IMR-90 (cell line): ENCODE measurements at regions of chr10 and their contacts with region 1.

Region 1: GRCh38 chr10:45470098-45471012 is 96.3 kb downstream of the ALOX5 start:
- DNase-seq: peak; percentile 87
- ATAC-seq: peak; percentile 96
- H3K4me3 ChIP-seq: no peak overlapping the region
- H3K27ac ChIP-seq: no peak overlapping the region
- H3K4me1 ChIP-seq: peaks cover 2% of the 10 kb centered on the region; the same call in 1 of the 2 replicates
- H3K27me3 ChIP-seq: no peaks in the 10 kb centered on the region
- CTCF ChIP-seq: no peak
- POLR2A ChIP-seq: no peak
- RAD21 ChIP-seq: no peak

Region 2: DNA sequence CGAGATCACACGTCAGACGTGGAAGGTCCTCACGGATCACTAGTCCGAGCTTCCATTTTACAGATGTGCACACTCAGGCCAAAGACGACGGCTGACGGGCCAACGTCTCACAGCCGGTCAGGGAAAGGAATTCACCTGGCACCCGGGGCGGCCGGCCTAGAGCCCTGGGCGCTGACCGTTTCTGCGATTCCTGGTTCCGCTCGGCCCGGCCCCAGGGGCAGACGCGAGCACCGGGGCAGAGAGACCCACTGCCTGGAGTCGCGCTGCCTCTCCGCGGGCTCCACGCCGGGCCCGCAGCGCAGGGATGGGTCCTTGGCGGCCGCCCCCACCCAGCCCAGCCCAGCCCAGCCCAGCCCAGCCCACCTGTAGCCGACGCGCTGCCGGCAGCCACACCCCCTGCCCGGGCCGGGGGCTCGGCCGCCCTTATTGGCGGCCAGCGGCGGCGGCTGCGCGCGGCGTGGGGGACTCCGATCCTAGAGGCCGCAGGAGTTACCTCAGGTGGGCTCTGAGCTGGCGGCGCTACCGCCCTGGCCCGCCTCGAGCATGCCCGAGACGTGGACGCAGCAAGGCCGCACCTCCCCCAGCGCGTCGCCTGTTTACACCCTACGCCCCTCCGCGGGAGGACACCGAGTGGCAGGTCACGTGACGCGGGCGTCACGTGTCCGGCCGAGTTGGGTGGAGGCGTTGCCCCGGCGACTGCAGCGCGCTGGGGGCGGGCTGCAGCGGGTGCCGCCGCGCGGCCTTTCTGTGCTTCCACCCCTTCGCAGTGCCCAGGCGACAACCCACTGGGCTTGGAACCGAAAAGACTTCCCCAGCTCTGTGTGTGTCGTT is 124.1 kb after region 1 on chr10:
- CTCF ChIA-PET with region 1: no interaction called
- POLR2A ChIA-PET with region 1: no interaction called
- dilution Hi-C with region 1: no loop called
- in situ Hi-C with region 1: no loop called
- intact Hi-C with region 1: loop called (anchors 1 kb)
- DNase-seq: peak; percentile 89
- ATAC-seq: peak; percentile 95
- H3K4me3 ChIP-seq: peak overlapping the region; percentile 65
- H3K27ac ChIP-seq: no peak overlapping the region; the same call in 1 of the 2 replicates
- H3K4me1 ChIP-seq: peaks cover 2% of the 10 kb centered on the region; the same call in 1 of the 2 replicates
- H3K27me3 ChIP-seq: peaks cover 6% of the 10 kb centered on the region; the same call in 1 of the 2 replicates
- CTCF ChIP-seq: peak; percentile 4; the same call in 1 of the 2 replicates
- POLR2A ChIP-seq: no peak
- RAD21 ChIP-seq: no peak

Region 3: GRCh38 chr10:45672181-45673073 is 202.1 kb after region 1 on chr10 and contains the start of gene ZFAND4:
- CTCF ChIA-PET with region 1: no interaction called
- POLR2A ChIA-PET with region 1: no interaction called
- dilution Hi-C with region 1: no loop called
- in situ Hi-C with region 1: loop called (anchors 10 kb)
- intact Hi-C with region 1: loop called (anchors 1 kb)
- DNase-seq: peak; percentile 94
- ATAC-seq: peak; percentile 97
- H3K4me3 ChIP-seq: peak within 1 kb of the TSS; percentile 95
- H3K27ac ChIP-seq: peak within 1 kb of the TSS; percentile 81
- H3K4me1 ChIP-seq: peaks cover 2% of the 10 kb centered on the region; the same call in 1 of the 2 replicates
- H3K27me3 ChIP-seq: no peaks in the 10 kb centered on the region
- CTCF ChIP-seq: peak; percentile 76
- POLR2A ChIP-seq: peak; percentile 54; the same call in 1 of the 2 replicates
- RAD21 ChIP-seq: peak; percentile 68
- total RNA-seq, gene ZFAND4: 3.4 and 5.0 TPM in 2 replicates